H1 (cell line): ENCODE measurements at regions of chr7 and their contacts with region 1.

Region 1: DNA sequence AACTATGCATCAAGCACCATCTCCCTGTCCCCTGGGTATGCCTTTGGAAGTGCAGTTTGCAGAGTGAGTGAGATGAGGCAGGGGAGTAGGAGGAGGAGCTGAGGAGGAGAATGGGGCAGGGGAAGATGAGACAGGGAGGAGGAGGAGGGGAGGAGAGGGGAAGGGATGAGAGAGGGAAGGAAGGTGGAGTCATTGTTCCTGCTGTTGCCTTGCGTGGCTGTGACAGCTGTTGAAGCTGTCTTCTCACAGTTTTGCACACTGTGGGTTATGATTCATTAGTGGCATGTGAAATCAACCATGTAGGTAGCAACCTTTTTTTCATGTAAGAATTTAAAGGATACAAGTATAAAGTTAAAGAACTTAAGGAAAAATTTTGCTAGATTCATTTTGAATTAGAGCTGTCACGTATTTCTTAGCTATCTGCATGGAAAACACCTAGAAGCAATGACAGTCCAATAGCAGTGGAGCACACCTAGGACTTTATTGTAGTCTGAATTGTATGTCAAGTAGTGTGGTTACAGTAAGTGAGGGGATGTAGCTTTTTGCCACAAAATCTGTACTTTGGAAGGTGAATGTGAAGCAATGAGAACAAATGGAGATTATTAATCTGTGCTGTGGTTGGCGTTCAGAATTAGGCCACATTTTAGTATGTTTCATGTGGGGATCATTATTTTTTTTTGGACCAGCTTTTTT is 21.7 kb downstream of the CCM2 start:
- DNase-seq: no peak
- H3K4me3 ChIP-seq: no peak overlapping the region
- H3K27ac ChIP-seq: no peak overlapping the region
- H3K4me1 ChIP-seq: no peaks in the 10 kb centered on the region
- H3K27me3 ChIP-seq: no peaks in the 10 kb centered on the region
- CTCF ChIP-seq: no peak
- EP300 ChIP-seq: no peak
- POLR2A ChIP-seq: no peak
- RAD21 ChIP-seq: no peak

Region 2: DNA sequence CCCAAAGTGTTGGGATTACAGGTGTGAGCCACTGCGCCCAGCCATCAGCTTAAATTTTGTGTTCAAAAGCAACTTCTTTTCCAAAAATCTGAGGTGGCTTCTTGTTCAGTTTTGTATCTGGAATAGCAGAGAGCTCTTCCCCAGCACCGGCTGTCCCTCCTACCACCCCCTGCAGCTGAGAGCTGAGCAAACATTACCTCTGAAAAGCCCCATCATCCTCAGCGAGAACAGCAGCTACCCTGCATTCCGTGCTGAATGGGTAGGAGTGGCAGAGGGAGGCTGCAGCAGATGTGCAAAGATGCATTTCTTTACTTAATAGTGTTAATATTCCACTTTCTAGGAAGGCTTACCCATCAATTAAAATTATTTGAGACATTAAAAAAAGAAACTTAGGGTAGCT is 10.1 kb after region 1 on chr7:
- CTCF ChIA-PET with region 1: interaction called, 10 read pairs
- POLR2A ChIA-PET with region 1: interaction called, 3 read pairs
- DNase-seq: no peak
- H3K4me3 ChIP-seq: no peak overlapping the region
- H3K27ac ChIP-seq: no peak overlapping the region
- H3K4me1 ChIP-seq: peaks cover 0 to 5% (median 0%) of the 10 kb centered on the region in 4 experiments; a peak in 1 of 7 replicates
- H3K27me3 ChIP-seq: no peaks in the 10 kb centered on the region
- CTCF ChIP-seq: no peak
- EP300 ChIP-seq: peak in 1 of 2 experiments; percentile 14; a peak in 1 of 3 replicates
- POLR2A ChIP-seq: no peak
- RAD21 ChIP-seq: no peak